Activated CD4-positive, alpha-beta memory T cell treated with anti-CD3 and anti-CD28 coated beads for 36 hours (primary cell): ENCODE measurements at regions of chr1 and their contacts with region 1.

Region 1: GRCh38 chr1:44721485-44722361 is 9.2 kb downstream of the RNU5D-1 start:
- DNase-seq: peak; percentile 91
- H3K4me3 Mint-ChIP-seq: peak overlapping the region; percentile 66
- H3K27ac Mint-ChIP-seq: peak overlapping the region; percentile 96
- H3K4me1 Mint-ChIP-seq: peaks cover 77% of the 10 kb centered on the region
- H3K27me3 Mint-ChIP-seq: peaks cover 4% of the 10 kb centered on the region

Region 2: DNA sequence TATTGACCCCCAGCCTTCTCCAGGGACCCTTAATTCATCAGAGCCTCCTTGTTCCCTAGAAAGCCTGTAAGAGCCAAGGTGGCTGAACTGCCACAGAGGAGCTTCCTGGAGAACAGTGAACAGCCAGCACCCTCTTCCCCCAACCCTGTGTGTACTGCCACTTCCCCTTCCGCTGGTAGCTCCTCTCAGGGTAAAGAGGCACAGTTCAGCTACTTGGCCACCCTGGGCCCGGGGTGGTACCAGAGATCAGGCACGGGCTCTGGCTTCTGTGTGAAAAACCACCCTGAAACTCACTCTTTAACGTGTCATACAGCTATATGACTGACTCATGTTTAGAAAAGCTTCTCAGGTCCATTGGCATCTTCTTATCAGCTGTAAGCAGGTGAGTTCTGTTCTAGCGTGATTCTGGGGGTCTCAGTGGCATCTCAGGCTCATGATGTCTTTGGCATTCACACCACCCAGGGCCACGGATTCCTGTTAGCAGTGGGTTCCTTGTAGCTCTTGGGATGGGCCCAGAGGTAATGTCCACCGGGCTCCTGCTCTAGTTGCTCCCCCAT is 24.9 kb before region 1 on chr1:
- CTCF ChIA-PET with region 1: no interaction called
- POLR2A ChIA-PET with region 1: interaction called, 20 read pairs
- intact Hi-C with region 1: no loop called
- DNase-seq: peak; percentile 62
- H3K4me3 Mint-ChIP-seq: no peak overlapping the region
- H3K27ac Mint-ChIP-seq: peak overlapping the region; percentile 58
- H3K4me1 Mint-ChIP-seq: peaks cover 18% of the 10 kb centered on the region
- H3K27me3 Mint-ChIP-seq: no peaks in the 10 kb centered on the region

Region 3: DNA sequence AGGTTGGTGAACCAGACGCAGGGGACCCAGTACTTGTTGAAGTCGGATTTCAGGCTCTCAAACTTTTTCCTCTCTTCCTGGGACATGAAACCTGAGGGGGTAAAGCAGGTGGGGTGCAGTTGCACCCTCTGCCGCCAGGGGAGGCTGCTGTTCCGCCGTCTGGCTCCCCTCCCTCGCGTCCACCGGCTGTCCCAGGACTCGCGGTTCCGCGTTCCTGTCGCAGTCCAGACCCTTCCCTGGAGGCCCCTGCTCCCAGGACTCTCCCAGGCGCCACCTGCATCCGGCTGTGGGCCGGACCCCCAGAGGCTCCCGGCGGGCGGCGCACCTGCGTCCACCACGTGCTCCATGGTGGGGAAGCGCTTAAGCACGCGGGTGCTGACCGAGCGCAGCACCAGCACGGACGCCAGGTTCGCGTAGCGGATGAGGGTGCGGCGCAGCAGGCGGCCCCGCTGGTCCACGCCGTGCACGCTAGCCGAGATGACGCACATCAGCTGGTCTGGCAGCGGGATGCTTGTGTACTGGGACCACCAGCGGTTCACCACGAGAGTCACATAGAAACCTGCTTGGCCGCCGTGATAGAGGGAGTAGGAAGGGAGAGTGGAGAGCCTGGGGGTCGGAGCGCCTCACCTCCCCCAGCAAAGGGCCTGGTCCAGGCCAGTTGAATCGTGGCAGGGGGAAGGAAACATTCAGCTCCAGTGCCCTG is 64.6 kb after region 1 on chr1:
- CTCF ChIA-PET with region 1: interaction called, 4 read pairs
- POLR2A ChIA-PET with region 1: interaction called, 12 read pairs
- intact Hi-C with region 1: no loop called
- DNase-seq: peak; percentile 83
- H3K4me3 Mint-ChIP-seq: peak overlapping the region; percentile 73
- H3K27ac Mint-ChIP-seq: peak overlapping the region; percentile 31
- H3K4me1 Mint-ChIP-seq: peaks cover 31% of the 10 kb centered on the region
- H3K27me3 Mint-ChIP-seq: no peaks in the 10 kb centered on the region

Region 4: GRCh38 chr1:44812822-44813543 is 91.3 kb after region 1 on chr1:
- CTCF ChIA-PET with region 1: interaction called, 12 read pairs
- POLR2A ChIA-PET with region 1: interaction called, 151 read pairs
- intact Hi-C with region 1: no loop called
- DNase-seq: no peak
- H3K4me3 Mint-ChIP-seq: peak overlapping the region; percentile 73
- H3K27ac Mint-ChIP-seq: peak overlapping the region; percentile 98
- H3K4me1 Mint-ChIP-seq: peaks cover 67% of the 10 kb centered on the region
- H3K27me3 Mint-ChIP-seq: no peaks in the 10 kb centered on the region

Region 5: DNA sequence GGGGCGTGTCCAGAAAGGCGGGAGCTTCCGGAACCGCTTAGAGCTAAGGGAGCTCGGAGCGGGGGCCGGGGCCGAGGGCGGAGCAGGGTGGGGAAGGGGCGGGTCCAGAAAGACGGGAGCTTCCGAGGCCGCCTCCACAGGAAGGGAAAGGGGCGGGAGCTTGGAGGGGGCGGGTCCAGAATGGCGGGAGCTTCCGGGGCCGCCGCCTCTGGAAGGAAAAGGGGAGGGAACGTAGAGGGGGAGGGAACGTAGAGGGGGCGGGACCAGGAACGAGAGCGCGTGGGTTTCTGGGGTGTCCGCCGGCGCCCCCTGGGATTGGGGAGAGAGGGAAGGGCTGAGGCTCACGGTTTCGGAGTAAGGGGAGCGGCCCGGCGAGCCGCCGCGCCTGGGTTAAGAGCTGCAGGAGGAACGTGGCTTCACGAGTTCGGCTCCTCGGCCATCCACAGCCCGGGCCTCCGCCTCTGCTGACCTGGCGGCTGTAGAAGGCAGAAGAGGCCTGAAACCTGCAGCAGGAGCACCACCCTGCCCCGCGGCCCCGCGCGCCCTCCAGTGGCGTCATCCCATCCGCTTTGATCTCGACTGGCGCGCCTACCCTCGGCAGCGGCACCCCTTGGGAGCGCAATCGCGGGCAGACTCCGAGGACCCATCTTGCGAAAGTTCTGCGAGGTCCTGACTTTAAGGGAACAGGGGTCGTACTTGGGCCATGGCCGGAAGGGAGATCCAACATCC is 582.0 kb after region 1 on chr1:
- CTCF ChIA-PET with region 1: no interaction called
- POLR2A ChIA-PET with region 1: interaction called, 16 read pairs
- intact Hi-C with region 1: no loop called
- DNase-seq: peak; percentile 100
- H3K4me3 Mint-ChIP-seq: peak overlapping the region; percentile 89
- H3K27ac Mint-ChIP-seq: peak overlapping the region; percentile 96
- H3K4me1 Mint-ChIP-seq: peaks cover 29% of the 10 kb centered on the region
- H3K27me3 Mint-ChIP-seq: no peaks in the 10 kb centered on the region